ENCODE measurements at regions of chr2 and their contacts with region 1.

Region 1: GRCh38 chr2:85911814-85912692 is 23.3 kb upstream of the ST3GAL5 start:
- DNase-seq: peak; percentile 85
- ATAC-seq: peak; percentile 82
- H3K4me3 ChIP-seq: no peak overlapping the region
- H3K27ac ChIP-seq: peak overlapping the region; percentile 70
- H3K4me1 ChIP-seq: peaks cover 9% of the 10 kb centered on the region
- H3K27me3 ChIP-seq: no peaks in the 10 kb centered on the region
- CTCF ChIP-seq: no peak
- POLR2A ChIP-seq: no peak
- RAD21 ChIP-seq: 0 out of 2 replicates have a peak, but pooled peaks have one; percentile 4

Region 2: DNA sequence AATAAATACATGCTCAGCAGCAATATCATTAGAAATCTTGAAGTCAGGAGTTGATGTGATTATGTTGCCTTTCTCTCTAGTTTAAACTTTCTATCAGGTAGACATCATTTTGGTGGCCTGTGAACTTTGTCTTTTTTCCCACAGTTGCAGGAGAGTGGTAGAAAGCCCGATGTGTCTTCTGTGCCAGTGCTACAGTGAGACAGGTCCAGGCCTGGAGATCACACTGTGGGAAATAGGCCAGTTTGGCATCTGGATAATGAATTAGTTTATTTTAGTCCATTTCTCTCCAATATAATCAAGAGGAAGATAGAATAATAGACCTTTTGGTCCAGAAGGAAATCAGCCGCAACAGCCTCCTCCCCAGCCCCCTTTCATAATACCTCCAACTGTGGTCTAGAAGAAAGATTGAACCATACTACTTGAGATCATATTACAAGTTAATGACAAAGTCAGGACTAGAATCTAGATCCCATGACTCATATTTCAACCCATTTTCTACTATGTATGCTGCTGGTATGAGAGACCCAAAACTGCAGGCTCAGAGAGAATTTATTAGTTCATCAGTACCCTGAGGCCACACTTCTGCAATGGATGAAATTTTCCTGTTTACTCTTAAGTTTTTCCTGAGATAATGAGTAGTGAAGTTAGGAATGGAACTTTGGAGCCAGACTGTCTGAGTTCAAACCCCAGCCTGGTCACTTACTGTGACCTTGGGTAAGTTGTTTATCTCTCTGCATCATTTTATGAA is 920.5 kb before region 1 on chr2:
- CTCF ChIA-PET with region 1: no interaction called
- POLR2A ChIA-PET with region 1: no interaction called
- dilution Hi-C with region 1: no loop called
- in situ Hi-C with region 1: no loop called
- intact Hi-C with region 1: loop called (anchors 10 kb)
- DNase-seq: peak; percentile 97
- ATAC-seq: peak; percentile 88
- H3K4me3 ChIP-seq: no peak overlapping the region
- H3K27ac ChIP-seq: peak overlapping the region; percentile 89
- H3K4me1 ChIP-seq: peaks cover 25% of the 10 kb centered on the region
- H3K27me3 ChIP-seq: no peaks in the 10 kb centered on the region
- CTCF ChIP-seq: no peak
- POLR2A ChIP-seq: no peak
- RAD21 ChIP-seq: no peak